ENCODE measurements at regions of chr9 and their contacts with region 1.

Region 1: GRCh38 chr9:89602978-89603766 is 1.6 kb upstream of the GADD45G start:
- DNase-seq: peak; percentile 92
- ATAC-seq: peak; percentile 24
- H3K4me3 Mint-ChIP-seq: peak overlapping the region; percentile 75
- H3K27ac Mint-ChIP-seq: peak overlapping the region; percentile 75
- H3K4me1 Mint-ChIP-seq: peaks cover 32% of the 10 kb centered on the region
- H3K27me3 Mint-ChIP-seq: peaks cover 56% of the 10 kb centered on the region

Region 2: GRCh38 chr9:89701221-89701798 is 98.1 kb after region 1 on chr9:
- CTCF ChIA-PET with region 1: interaction called, 15 read pairs
- DNase-seq: peak; percentile 85
- ATAC-seq: peak; percentile 88
- H3K4me3 Mint-ChIP-seq: peak overlapping the region; percentile 77
- H3K27ac Mint-ChIP-seq: peak overlapping the region; percentile 87
- H3K4me1 Mint-ChIP-seq: peaks cover 70% of the 10 kb centered on the region
- H3K27me3 Mint-ChIP-seq: no peaks in the 10 kb centered on the region

Region 3: DNA sequence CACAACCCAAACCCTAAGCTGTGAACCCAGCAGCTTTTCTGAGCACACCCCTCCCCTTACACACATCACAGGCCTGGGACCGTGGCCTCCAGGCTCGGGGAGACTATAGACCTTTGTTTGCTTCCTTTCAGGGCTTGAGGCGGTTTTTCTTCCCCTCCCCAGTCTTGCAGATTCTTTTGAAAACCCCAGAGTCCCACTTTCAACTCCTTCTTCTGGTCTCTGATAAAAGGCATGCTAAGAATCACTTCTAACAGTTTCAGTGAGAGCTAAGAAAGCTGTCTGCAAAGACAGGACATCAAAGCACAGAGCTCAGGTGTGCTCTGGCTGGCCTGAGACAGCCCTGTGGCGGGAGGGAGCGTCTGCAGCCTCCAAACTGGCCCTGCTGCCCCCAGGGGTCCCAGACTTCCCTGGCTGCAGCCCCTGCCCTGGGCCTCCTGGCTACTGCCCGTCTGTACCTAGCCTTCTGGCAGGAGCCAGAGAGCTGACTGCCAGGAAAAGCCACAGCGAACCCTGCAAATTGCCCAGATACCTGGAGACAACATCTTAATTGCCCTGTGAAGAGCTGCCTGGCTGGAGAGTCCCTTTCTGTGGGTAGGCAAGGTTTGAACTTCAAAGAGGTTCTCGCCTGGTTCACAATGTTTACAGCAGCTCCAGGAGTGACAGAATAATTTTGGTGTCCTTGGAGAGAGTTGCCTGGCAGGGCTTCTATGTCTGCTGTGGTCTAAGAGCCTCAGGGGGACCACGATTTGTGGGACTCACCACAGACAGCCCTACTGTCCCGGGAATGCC is 140.6 kb after region 1 on chr9:
- CTCF ChIA-PET with region 1: interaction called, 34 read pairs
- DNase-seq: peak; percentile 90
- ATAC-seq: peak; percentile 81
- H3K4me3 Mint-ChIP-seq: peak overlapping the region; percentile 29
- H3K27ac Mint-ChIP-seq: peak overlapping the region; percentile 93
- H3K4me1 Mint-ChIP-seq: peaks cover 78% of the 10 kb centered on the region
- H3K27me3 Mint-ChIP-seq: no peaks in the 10 kb centered on the region

Region 4: DNA sequence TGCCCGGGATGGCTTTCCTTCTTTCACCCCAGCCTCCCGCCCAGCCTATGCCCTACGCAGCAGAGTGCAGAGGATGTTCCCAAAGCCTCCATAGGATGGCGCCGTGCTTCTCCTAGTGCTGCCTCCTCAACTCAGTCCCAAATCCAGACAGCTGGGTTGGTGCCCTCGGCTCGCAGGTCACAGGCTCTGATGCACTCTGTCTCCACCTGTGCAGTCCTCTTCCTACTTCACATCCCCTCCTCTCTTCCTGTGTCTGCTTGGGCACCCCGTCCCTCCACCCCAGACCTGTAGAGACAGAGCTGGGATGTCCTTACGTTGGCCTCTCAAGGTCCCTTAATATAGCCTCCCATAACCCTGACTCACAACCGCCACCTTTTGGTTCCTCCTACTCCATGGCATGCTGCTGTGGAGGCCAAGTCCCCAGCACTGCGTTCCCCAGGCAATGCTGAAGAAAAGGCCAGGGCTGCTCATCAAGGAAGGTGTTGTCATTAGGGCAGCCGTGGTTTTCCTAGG is 316.1 kb after region 1 on chr9:
- CTCF ChIA-PET with region 1: interaction called, 50 read pairs
- DNase-seq: peak; percentile 68
- ATAC-seq: peak; percentile 92
- H3K4me3 Mint-ChIP-seq: no peak overlapping the region
- H3K27ac Mint-ChIP-seq: no peak overlapping the region
- H3K4me1 Mint-ChIP-seq: peaks cover 9% of the 10 kb centered on the region
- H3K27me3 Mint-ChIP-seq: peaks cover 36% of the 10 kb centered on the region

Region 5: DNA sequence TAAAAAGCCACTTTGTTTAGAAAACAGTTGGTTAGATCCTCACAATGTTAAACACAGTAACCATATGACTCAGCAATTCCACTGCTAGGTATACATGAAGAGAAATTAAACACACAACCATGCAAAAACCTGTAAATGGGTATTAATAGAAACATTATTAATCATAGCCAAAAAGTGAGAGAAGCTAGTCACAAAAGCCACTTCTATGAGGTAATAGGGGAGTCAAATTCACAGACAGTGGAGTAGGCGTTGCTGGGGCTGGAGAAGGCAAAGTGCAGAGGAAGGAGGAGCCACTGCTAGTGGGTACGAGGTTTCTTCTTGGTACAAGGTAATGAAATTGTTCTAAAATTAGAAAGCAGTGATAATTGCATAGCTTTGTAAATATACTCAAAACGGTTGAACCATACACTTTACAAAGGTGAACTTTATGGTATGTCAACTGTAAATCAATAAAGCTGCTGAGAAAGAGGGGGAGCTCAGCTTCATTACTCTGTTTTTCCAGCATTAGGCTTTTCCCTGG is 366.0 kb after region 1 on chr9:
- CTCF ChIA-PET with region 1: interaction called, 11 read pairs
- DNase-seq: peak; percentile 47
- ATAC-seq: peak; percentile 78
- H3K4me3 Mint-ChIP-seq: no peak overlapping the region
- H3K27ac Mint-ChIP-seq: no peak overlapping the region
- H3K4me1 Mint-ChIP-seq: peaks cover 24% of the 10 kb centered on the region
- H3K27me3 Mint-ChIP-seq: peaks cover 3% of the 10 kb centered on the region

Region 6: DNA sequence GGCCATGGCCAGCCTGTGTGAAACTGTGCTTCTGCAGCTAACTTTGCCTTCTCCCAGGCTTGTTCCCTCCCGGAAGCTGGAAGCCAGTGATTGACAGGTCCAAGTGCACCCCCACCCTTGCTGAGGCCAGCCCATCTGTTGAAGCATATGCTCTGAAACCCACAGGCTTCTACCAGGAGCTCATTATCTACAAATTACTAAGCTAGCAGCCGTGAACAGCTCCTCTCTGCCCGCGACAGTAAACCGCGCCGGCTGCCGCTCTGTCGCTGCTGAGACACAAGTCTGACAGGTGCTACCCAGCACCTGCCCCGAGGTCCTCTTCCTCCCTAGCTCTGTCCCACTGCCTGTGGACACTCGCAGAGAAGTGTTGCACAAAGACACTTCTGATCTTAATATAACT is 492.5 kb after region 1 on chr9:
- CTCF ChIA-PET with region 1: interaction called, 168 read pairs
- DNase-seq: peak; percentile 59
- ATAC-seq: peak; percentile 69
- H3K4me3 Mint-ChIP-seq: no peak overlapping the region
- H3K27ac Mint-ChIP-seq: no peak overlapping the region
- H3K4me1 Mint-ChIP-seq: peaks cover 19% of the 10 kb centered on the region
- H3K27me3 Mint-ChIP-seq: peaks cover 51% of the 10 kb centered on the region

Measured in activated CD8-positive, alpha-beta memory T cell treated with anti-CD3 and anti-CD28 coated beads, Interleukin-2, amount 10 ng/mL, durations not matched to agents 7 days and 5 days (primary cell).